ENCODE measurements at regions of chr4 and their contacts with region 1.

Region 1: DNA sequence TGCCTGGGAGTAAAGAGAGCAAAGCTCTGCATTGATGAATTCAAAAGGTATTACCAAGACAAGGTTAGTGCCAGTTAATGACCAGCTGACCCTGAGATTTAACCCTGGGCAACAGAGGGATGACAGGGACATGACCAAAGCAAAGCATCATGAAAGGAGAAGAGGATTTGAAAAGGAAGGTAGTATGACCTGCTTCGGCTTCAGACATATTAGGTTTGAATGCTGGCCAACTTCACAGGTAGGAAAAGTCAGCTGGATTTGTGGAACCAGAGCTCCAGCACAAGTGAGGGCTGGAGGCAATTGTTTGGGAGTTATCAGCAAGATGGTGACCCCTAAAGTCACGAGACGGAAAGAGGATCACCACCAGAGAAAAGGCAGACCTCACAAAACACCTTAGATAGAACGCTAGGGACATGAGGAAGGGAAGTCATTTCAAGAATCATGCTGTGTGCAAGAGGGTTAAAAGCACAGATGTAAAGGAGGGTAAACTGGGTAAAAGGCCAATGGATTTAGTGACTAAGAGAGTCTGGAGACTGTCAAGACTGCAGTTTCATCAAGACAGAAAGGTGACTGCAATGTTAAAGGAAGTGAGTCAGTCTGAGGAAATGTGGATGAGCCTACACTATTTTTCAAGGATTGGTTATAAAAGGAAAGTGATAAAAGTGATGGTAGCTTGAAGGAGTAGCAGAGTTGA is 45.6 kb downstream of the SH3RF1 start:
- DNase-seq: no peak
- ATAC-seq: peak; percentile 42
- H3K4me3 ChIP-seq: no peak overlapping the region
- H3K27ac ChIP-seq: no peak overlapping the region
- H3K4me1 ChIP-seq: peaks cover 4% of the 10 kb centered on the region; the same call in 1 of the 2 replicates
- H3K27me3 ChIP-seq: no peaks in the 10 kb centered on the region
- CTCF ChIP-seq: no peak
- EP300 ChIP-seq: no peak
- POLR2A ChIP-seq: no peak
- RAD21 ChIP-seq: no peak

Region 2: GRCh38 chr4:169238445-169238844 is 13.2 kb after region 1 on chr4:
- CTCF ChIA-PET with region 1: interaction called, 14 read pairs
- POLR2A ChIA-PET with region 1: interaction called, 3 read pairs
- RAD21 ChIA-PET with region 1: interaction called, 3 read pairs
- SMC1A ChIA-PET with region 1: interaction called, 5 read pairs
- in situ Hi-C with region 1: no loop called
- intact Hi-C with region 1: no loop called
- DNase-seq: no peak
- ATAC-seq: no peak
- H3K4me3 ChIP-seq: no peak overlapping the region
- H3K27ac ChIP-seq: no peak overlapping the region
- H3K4me1 ChIP-seq: no peaks in the 10 kb centered on the region
- H3K27me3 ChIP-seq: no peaks in the 10 kb centered on the region
- CTCF ChIP-seq: no peak
- EP300 ChIP-seq: no peak
- POLR2A ChIP-seq: no peak
- RAD21 ChIP-seq: no peak

Measured in GM12878 (cell line).